ENCODE measurements at regions of chr17 and their contacts with region 1.

Region 1: GRCh38 chr17:45092932-45093430 is 31.9 kb downstream of the NMT1 start:
- DNase-seq: peak; percentile 81 to 97
- H3K4me3 ChIP-seq: peak overlapping the region in 1 of 2 donors; percentile 8
- H3K27ac ChIP-seq: peak overlapping the region; percentile 87 to 94
- H3K4me1 ChIP-seq: peaks cover 41 to 80% of the 10 kb centered on the region in 2 donors
- H3K27me3 ChIP-seq: no peaks in the 10 kb centered on the region
- CTCF ChIP-seq: no peak

Region 2: DNA sequence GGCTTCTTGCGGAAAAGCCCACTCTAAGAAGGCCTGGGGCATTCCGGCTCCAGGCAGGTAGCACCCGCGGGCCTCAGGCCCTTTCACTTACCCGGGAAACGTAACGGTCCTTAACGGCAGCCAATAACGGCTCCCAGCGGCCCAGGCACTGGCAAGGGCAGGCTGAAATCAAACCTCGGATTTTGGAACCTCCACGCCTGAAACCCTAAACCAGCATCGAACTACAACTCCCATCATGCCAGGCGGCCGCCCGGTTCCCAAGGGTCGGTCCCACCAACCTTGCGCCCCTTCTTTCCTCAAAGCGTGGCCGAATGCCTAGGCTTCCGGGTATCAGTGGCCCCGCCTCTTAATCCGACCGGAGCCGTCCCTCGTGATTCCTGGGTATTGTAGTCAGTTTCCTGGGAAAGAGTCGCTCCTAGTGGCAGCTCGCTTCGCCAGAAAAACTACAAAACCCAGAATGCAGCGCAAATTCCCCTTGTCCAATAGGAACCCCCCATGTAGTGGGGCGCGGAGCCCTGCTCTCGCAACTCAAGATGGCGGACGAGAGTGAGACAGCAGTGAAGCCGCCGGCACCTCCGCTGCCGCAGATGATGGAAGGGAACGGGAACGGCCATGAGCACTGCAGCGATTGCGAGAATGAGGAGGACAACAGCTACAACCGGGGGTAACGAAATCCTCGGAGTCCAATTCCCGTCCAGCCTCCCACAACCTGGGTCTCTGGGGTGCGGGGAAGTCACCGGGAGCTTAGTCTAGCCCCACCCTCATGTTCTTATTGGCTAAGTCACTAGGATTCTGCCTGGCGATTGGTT is 32.0 kb before region 1 on chr17 and contains the start of gene NMT1:
- intact Hi-C with region 1: loop called (anchors 1 kb)
- DNase-seq: peak; percentile 97 to 100
- H3K4me3 ChIP-seq: peak within 1 kb of the TSS; percentile 82 to 84
- H3K27ac ChIP-seq: peak within 1 kb of the TSS; percentile 90 to 94
- H3K4me1 ChIP-seq: peaks cover 11 to 41% of the 10 kb centered on the region in 2 donors
- H3K27me3 ChIP-seq: no peaks in the 10 kb centered on the region
- CTCF ChIP-seq: no peak
- total RNA-seq, gene NMT1: 89.7 TPM

Region 3: GRCh38 chr17:45277216-45277849 is 184.4 kb after region 1 on chr17:
- intact Hi-C with region 1: no loop called
- DNase-seq: peak; percentile 73 to 95
- H3K4me3 ChIP-seq: peak overlapping the region in 1 of 2 donors; percentile 42
- H3K27ac ChIP-seq: peak overlapping the region in 1 of 2 donors; percentile 40
- H3K4me1 ChIP-seq: peaks cover 0 to 11% of the 10 kb centered on the region in 2 donors
- H3K27me3 ChIP-seq: no peaks in the 10 kb centered on the region
- CTCF ChIP-seq: peak; percentile 80 to 86 (median 85)

Measured in ascending aorta (tissue), 2 donors.